Sciatic nerve (tissue), 2 donors: ENCODE measurements at regions of chr20 and their contacts with region 1.

Region 1: DNA sequence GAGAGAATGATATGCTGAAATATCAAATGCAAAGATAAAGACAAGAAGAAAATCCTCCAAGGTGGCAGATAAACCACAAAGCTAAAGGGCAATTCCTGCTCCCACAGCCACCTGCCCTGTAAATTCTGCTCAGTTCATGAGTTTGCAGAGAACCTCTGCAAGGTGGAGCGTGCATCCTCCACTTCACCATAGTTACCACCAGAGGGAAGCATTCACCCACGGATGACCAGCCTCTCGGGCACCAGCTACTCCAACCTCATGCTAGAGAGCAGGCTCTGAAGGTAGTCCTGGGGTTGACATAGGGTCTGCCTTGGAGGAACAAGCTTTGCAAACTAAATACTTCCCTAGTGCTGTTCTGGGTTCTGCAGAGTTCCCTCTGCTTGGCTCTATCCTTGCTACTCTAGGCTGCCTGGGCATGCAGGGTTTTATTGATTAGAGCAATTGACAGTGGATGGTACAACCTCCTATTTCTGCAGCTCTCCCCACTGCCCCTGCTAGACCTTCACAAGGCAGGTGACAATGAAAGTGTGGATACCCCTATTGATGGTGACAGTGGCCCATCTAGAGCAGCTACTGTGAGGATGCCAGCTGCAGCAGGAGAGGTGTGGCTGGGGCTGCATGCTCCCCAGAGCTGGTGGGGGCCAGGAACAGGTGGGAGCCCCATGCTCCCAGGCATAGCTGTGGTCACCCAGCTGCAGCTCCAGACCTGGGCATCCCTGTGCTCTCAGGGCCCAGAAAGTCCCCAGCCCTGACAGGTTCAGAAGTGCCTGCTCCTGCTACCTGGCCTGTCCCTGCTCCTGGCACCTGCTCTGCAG is 51.1 kb downstream of the GGTLC1 start:
- DNase-seq: peak; percentile 71
- ATAC-seq: peak; percentile 93

Region 2: DNA sequence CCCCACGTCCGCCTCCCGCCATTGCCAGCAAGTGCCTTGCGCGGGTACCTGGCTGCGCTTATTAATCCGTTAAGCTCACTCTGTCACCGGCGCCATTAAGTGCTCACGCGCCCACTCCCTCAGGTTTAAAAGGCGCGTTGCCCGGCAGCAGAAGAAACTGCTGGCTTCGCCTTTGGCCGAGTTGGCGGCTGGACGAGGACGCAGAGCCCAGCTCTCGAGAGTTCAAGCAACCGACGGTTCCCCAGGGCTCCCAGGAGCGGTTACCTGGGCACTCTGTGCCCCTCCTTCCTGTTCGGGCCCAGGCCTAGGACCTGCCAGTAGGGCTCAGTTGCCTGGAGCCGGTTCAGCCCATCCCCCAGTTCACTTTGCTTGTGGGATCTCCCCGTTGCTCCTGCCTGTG is 51.1 kb after region 1 on chr20 and contains the start of gene GGTLC1:
- intact Hi-C with region 1: loop called (anchors 5 kb)
- DNase-seq: no peak
- ATAC-seq: no peak
- total RNA-seq, gene GGTLC1: not detected